ENCODE measurements at regions of chr14 and their contacts with region 1.

Region 1: DNA sequence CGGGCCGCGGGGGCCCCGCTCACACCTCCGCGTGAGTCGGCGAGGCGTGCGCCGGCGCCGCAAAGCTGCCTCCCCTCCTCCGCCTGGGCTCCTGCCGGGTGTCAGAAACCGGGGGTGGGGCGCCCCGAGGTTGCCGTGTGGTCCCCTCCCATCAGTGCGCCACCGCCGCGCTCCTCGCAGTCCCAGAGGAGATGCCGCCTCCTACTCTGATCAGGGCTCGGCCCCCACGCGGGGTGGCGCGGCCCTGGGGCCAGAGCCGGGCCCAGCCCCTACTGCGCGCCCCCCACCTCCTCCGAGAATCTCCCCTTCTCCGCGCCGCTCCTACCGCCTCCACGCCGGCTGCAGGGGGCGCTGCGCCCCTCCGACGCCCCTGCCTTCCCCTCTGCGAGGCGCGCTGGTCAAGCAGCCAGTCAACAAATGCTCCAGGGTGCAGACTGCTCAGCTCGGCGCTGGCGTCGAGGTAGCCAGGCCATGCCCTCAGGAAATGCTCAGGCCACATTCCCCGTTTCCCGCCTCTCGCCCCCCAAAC is 467 bp upstream of the JAG2 start:
- DNase-seq: no peak
- H3K4me3 Mint-ChIP-seq: peak overlapping the region; percentile 70
- H3K27ac Mint-ChIP-seq: no peak overlapping the region
- H3K4me1 Mint-ChIP-seq: peaks cover 12% of the 10 kb centered on the region
- H3K27me3 Mint-ChIP-seq: no peaks in the 10 kb centered on the region
- CTCF ChIP-seq: peak; percentile 20

Region 2: DNA sequence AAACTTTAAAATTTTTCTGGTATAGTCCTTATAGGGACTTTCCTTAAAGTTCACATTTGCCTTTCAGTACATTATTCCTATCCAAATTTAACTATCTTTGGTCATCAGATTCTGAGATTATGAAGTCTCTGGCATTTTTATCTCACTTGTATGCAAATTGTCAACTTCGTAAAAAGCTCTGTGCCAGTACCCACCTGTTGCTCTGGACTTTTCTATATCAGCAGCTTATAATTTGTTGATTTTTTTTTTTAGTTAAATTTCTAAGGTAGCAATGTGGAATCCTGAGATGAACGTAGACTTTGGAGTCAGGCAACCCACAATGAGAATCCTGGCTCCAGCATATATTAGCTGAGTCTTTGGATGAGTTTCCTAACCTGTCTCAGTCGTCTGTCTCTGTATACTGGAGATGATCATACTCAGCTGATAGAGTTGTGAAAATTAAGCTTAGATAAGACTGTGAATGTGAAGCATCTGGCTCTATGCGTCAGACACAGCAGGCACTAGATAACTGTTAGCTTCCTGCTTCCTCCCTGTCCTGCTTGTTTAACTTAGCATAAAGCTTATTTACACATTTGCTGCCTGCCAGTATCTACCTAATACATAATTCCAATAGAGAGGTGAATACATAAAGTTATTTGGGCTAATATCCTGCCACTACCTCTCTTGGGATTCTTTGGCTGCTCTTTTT is 1724.1 kb before region 1 on chr14:
- CTCF ChIA-PET with region 1: no interaction called
- POLR2A ChIA-PET with region 1: no interaction called
- intact Hi-C with region 1: no loop called
- DNase-seq: no peak
- H3K4me3 Mint-ChIP-seq: no peak overlapping the region
- H3K27ac Mint-ChIP-seq: no peak overlapping the region
- H3K4me1 Mint-ChIP-seq: peaks cover 18% of the 10 kb centered on the region
- H3K27me3 Mint-ChIP-seq: no peaks in the 10 kb centered on the region
- CTCF ChIP-seq: no peak

Region 3: DNA sequence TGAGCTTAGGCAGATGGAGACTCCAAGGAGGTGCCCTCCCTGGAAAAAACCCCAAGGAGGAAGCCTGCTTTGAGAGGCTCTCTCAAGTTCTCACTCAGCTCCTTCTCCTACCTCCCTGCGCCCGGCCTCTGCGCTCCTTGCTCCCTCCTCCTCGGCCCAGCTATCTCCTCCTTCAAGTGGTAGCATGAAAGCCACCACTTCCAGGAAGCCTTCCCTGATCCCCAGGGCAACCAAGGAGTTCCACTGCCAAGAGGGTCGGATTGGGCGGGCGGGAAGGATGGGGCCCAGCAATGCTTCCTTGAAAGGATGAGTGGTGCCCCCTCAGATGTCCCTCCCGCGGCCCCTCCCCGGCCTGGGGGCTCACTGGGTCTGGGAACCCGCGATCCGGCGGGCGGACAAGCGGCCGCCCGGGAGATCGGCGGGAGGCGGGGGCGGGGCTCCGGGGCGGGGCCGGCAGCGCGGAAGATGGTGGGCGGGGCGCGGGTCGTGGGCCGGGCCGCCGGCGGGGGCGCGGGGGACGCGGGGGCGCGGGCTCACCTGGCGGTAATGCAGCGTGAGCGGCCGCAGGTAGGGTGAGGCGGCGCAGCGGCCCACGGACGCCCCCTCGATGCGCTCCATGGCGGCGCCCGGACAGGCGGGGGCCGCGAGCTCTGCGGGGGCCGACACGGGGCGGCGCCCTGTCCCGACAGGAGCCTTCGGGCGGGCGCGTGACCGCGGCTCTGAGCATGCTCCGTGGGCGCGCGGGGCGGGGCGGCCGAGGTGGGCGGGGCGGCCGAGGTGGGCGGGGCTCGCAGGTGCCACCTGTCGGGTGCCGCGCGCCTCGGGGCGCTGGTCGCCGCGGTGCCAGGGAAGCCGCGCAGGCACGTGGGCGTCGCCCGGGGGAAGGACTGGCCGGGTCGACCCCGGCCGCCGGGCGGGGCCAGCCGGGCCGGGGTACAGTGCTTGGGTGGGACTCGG is 11.8 kb after region 1 on chr14 and contains the start of gene NUDT14:
- CTCF ChIA-PET with region 1: interaction called, 6 read pairs
- POLR2A ChIA-PET with region 1: interaction called, 13 read pairs
- intact Hi-C with region 1: no loop called
- DNase-seq: peak; percentile 72
- H3K4me3 Mint-ChIP-seq: peak within 1 kb of the TSS; percentile 69
- H3K27ac Mint-ChIP-seq: no peak within 1 kb of the TSS
- H3K4me1 Mint-ChIP-seq: no peaks in the 10 kb centered on the region
- H3K27me3 Mint-ChIP-seq: peaks cover 22% of the 10 kb centered on the region
- CTCF ChIP-seq: no peak
- total RNA-seq, gene NUDT14: 26.1 and 27.4 TPM in 2 replicates

Measured in MCF 10A (cell line).